ENCODE measurements at regions of chr1 and their contacts with region 1.

Region 1: DNA sequence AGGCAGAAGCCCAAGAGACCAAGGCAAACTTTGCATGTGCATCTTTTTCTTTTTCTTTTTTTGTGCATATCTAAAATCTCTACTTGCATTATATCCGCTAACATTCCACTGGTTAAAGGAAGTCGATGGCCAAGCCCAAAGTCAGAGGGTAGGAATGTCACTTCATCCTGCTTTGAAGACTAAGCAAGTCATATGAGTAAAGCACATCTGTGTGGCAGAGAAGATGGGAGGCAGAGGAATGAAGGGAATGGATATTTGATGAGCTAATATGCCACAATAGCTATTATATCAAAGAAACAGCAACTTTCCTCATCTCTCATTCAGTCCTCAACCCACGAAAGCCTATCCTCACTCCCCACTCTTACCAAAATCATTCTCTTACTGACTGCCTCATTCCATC is 59.3 kb downstream of the RNF220 start:
- DNase-seq: no peak

Region 2: DNA sequence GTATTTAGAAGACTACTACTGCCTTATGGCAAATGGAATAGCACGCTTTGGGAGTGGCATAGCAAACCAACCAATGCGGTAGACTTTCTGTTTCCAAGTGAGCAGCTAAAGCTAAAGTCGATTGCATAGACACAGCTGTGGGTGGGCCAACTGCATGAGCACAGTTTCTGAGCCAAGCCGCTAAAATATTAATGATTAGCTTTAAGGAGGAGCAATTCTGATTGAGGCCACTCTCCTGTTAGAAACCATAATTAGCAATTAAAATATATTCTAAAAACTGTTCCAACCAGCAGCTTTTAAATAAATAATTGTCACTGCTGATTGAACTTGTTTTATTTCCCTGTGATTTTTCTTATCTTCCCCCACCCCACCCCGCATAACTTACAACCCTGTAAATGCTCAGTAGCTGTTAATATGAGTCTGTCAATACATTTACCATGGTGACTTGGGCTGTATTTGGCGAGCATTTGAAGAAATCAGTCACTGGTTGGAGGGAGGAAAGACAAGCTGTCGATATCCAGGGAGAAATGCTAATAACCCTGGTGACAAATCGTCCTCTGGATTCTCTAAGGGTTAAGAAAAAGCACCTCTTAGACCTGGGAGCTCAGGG is 27.1 kb before region 1 on chr1:
- intact Hi-C with region 1: loop called (anchors 1 kb)
- DNase-seq: no peak

Measured in posterior cingulate gyrus (tissue), 11 donors.